Dendritic cell treated with granulocyte-macrophage colony-stimulating factor and Interleukin-4, amounts not matched to agents 40 ng/mL and 50 ng/mL, for 4 days (primary cell): ENCODE measurements at regions of chr9 and their contacts with region 1.

Region 1: GRCh38 chr9:92325269-92325990 is at the starts of genes CENPP and NOL8:
- H3K4me3 Mint-ChIP-seq: peak within 1 kb of the TSS; percentile 91
- H3K27ac Mint-ChIP-seq: peak within 1 kb of the TSS; percentile 99
- H3K4me1 Mint-ChIP-seq: peaks cover 22% of the 10 kb centered on the region
- H3K27me3 Mint-ChIP-seq: no peaks in the 10 kb centered on the region

Region 2: GRCh38 chr9:92293452-92294296 is 31.8 kb before region 1 on chr9 and contains the start of gene IARS1:
- intact Hi-C with region 1: loop called (anchors 1 kb)
- H3K4me3 Mint-ChIP-seq: peak within 1 kb of the TSS; percentile 87
- H3K27ac Mint-ChIP-seq: peak within 1 kb of the TSS; percentile 83
- H3K4me1 Mint-ChIP-seq: peaks cover 24% of the 10 kb centered on the region
- H3K27me3 Mint-ChIP-seq: no peaks in the 10 kb centered on the region

Region 3: DNA sequence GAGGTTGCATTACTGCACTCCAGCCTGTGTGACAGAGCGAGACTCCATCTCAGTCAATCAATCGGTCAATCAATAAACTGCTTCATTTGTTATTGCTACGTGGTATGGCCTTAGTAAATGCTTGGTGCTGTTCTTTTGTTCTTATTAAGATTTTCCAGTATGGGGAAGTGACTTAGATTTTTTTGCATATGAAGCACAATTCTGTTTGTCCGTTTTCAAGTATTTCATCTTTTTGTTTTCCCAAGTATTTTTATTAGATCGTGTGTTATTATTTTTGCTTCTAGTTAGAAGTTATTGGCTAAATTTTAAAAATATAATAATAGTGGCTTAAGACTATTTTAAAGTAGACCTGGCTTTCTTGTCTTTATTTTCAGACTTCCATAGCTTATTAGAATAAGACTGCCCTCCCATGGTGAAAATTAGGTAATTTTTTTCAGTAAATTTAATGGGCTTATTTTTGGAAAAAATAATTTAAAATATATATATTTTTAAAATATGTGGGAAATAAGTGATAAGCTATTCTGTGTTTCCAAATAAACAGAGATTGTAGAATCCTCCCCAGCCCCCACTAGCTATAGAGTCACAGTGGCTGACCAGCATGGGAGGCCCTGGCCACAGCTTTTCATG is 113.6 kb after region 1 on chr9:
- intact Hi-C with region 1: loop called (anchors 5 kb)
- H3K4me3 Mint-ChIP-seq: peak overlapping the region; percentile 5
- H3K27ac Mint-ChIP-seq: peak overlapping the region; percentile 5
- H3K4me1 Mint-ChIP-seq: no peaks in the 10 kb centered on the region
- H3K27me3 Mint-ChIP-seq: no peaks in the 10 kb centered on the region

Region 4: DNA sequence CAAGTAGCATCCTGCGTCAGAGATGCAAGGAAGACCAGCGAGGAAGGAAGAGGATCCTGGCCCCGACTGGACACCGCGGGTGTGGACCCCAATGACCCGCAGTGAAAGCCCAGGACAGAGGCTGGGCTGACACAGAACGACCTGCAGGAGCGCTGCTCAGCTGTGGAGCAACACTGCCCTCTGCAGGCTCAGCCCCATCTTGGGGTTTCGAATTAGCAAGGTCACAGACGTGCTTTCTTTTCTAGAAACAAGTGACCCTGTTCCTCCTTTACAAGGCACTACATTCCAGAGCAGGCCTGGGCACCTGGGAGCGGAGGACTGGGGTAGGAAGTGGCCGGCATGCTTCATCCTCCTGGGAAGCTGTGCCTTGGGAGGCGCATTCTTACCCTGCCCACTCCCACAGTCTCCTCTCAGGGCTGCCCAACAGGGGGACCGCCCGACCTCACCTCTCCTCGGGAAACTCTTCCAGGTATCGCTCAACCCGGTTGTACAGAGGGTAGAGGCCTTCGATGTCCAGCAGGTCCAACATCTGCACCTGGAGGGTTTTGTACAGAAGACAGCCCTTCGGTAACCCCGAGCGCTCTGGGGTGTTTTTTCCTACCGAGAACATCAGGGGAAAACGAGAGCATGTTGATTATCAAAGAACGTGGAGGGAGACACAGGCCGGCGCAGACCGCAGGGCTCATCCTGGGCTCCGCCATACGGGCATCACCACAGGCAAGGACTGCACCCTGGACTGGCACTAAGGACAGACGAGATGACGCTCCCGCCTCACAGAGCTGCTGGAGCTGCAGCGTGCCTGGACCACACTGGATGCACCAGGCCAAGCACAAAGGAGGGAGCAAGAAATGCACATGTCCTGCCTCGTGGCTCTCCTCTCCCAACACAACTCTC is 309.5 kb after region 1 on chr9:
- intact Hi-C with region 1: loop called (anchors 5 kb)
- H3K4me3 Mint-ChIP-seq: no peak overlapping the region
- H3K27ac Mint-ChIP-seq: peak overlapping the region; percentile 8
- H3K4me1 Mint-ChIP-seq: no peaks in the 10 kb centered on the region
- H3K27me3 Mint-ChIP-seq: no peaks in the 10 kb centered on the region

Region 5: GRCh38 chr9:92669890-92670708 is 344.7 kb after region 1 on chr9 and contains the start of gene IPPK:
- intact Hi-C with region 1: loop called (anchors 1 kb)
- H3K4me3 Mint-ChIP-seq: peak within 1 kb of the TSS; percentile 84
- H3K27ac Mint-ChIP-seq: peak within 1 kb of the TSS; percentile 89
- H3K4me1 Mint-ChIP-seq: peaks cover 43% of the 10 kb centered on the region
- H3K27me3 Mint-ChIP-seq: no peaks in the 10 kb centered on the region